Activated CD4-positive, alpha-beta T cell treated with anti-CD3 and anti-CD28 coated beads for 36 hours (primary cell): ENCODE measurements at regions of chr19 and their contacts with region 1.

Region 1: DNA sequence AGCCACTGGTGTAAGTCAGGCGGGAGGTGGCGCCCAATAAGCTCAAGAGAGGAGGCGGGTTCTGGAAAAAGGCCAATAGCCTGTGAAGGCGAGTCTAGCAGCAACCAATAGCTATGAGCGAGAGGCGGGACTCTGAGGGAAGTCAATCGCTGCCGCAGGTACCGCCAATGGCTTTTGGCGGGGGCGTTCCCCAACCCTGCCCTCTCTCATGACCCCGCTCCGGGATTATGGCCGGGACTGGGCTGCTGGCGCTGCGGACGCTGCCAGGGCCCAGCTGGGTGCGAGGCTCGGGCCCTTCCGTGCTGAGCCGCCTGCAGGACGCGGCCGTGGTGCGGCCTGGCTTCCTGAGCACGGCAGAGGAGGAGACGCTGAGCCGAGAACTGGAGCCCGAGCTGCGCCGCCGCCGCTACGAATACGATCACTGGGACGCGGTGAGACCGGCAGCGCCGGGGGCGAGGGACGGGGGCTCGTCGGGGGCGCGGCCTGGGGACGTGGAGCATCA is at the start of gene ALKBH7:
- DNase-seq: peak; percentile 98
- ATAC-seq: peak; percentile 84
- H3K4me3 Mint-ChIP-seq: peak within 1 kb of the TSS; percentile 80
- H3K27ac Mint-ChIP-seq: peak within 1 kb of the TSS; percentile 92
- H3K4me1 Mint-ChIP-seq: peaks cover 11% of the 10 kb centered on the region
- H3K27me3 Mint-ChIP-seq: no peaks in the 10 kb centered on the region
- total RNA-seq, gene ALKBH7: 22.8 to 44.7 TPM

Region 2: DNA sequence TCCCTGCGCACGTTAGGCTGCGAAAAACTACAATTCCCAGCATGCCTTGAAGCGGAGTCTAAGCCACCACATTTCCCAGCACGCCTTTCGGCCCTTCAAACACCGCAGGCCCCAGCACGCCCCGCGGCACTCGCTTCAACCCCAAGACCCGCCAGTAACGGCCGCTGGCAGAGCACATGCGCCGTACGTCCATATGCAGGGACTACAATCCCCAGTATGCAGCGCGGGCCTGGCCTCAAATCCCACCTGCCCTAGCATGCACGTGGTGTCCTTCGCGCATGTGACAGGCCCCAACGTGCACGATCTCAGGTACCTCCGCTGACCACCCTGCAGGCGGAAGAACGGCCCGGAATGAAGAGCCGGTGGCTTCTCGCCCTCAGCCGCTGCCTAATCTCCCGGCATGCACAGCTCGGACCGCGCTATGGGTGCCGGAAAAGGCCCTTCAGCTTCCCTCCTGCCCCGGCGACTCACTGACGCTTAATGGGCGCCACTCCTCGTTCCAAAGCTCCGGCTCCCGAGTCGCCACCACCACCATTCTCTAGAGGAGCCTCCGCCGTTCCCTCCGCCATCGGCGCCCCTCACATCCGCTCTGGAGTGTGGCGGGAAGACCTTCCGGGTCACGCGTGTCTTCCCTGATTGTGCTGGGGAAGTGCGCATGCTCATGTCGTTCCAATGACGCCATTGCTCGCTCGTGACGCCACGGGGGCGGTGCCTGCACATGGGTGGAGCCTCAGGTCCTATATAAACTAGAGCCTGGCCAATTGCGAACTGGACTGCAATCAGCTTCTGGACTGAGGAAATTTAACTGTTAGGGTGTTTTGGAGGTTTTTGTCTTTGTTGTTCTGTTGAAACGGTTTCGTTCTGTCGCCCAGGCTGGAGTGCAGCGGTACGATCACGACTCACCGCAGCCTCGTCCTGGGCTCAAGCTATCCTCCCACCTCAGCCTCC is 581.8 kb before region 1 on chr19 and contains the start of gene DUS3L:
- CTCF ChIA-PET with region 1: no interaction called
- POLR2A ChIA-PET with region 1: no interaction called
- intact Hi-C with region 1: loop called in 1 of 2 experiments (anchors 1 kb)
- DNase-seq: peak; percentile 98
- ATAC-seq: peak; percentile 97
- H3K4me3 Mint-ChIP-seq: peak within 1 kb of the TSS; percentile 98
- H3K27ac Mint-ChIP-seq: peak within 1 kb of the TSS; percentile 100
- H3K4me1 Mint-ChIP-seq: peaks cover 13% of the 10 kb centered on the region
- H3K27me3 Mint-ChIP-seq: no peaks in the 10 kb centered on the region
- total RNA-seq, gene DUS3L: 59.4 to 63.9 TPM

Region 3: DNA sequence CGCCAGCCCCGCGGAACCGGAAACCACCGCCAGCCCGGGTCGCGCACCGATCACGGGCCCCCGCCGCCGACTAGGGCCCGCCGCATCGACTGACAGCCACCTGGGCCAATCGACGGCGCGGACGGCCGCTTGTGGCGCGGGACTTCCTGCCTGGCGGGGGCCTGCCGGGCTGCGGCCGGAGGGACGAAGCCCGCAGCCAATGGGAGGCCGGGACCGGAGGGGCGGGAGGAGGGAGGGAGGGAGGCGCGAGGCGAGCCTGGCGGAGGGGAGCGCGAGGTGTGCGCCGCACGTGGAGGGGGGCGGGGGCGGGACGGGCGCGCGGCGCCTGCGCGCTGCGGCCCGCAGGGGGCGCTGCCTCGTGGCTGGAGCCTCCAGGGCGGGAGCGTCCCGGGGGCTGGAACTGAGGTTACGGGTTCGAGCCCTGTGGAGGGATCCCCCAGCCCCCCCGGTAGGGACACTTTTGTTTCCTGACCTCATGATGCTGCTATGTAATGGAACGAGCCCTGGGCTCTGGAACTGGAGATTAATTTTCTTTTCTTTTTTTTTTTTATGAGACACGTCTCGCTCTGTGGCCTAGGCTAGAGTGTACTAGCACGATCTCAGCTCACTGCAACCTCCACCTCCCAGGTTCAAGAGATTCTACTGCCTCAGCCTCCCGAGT is 92.6 kb before region 1 on chr19 and contains the start of gene MLLT1:
- CTCF ChIA-PET with region 1: no interaction called
- POLR2A ChIA-PET with region 1: no interaction called
- intact Hi-C with region 1: loop called in 1 of 2 experiments (anchors 1 kb)
- DNase-seq: peak; percentile 98
- ATAC-seq: peak; percentile 98
- H3K4me3 Mint-ChIP-seq: peak within 1 kb of the TSS; percentile 98
- H3K27ac Mint-ChIP-seq: peak within 1 kb of the TSS; percentile 93
- H3K4me1 Mint-ChIP-seq: peaks cover 38% of the 10 kb centered on the region
- H3K27me3 Mint-ChIP-seq: peaks cover 2% of the 10 kb centered on the region
- total RNA-seq, gene MLLT1: 45.0 to 46.6 TPM

Region 4: GRCh38 chr19:6460101-6460853 is 87.6 kb after region 1 on chr19:
- CTCF ChIA-PET with region 1: no interaction called
- POLR2A ChIA-PET with region 1: no interaction called
- intact Hi-C with region 1: loop called in 1 of 2 experiments (anchors 1 kb)
- DNase-seq: peak; percentile 99
- ATAC-seq: peak; percentile 83
- H3K4me3 Mint-ChIP-seq: peak overlapping the region; percentile 78
- H3K27ac Mint-ChIP-seq: peak overlapping the region; percentile 82
- H3K4me1 Mint-ChIP-seq: peaks cover 18% of the 10 kb centered on the region
- H3K27me3 Mint-ChIP-seq: no peaks in the 10 kb centered on the region

Region 5: GRCh38 chr19:6616011-6616410 is 243.4 kb after region 1 on chr19:
- CTCF ChIA-PET with region 1: no interaction called
- POLR2A ChIA-PET with region 1: no interaction called
- intact Hi-C with region 1: no loop called
- DNase-seq: peak; percentile 53
- ATAC-seq: peak; percentile 88
- H3K4me3 Mint-ChIP-seq: no peak overlapping the region
- H3K27ac Mint-ChIP-seq: peak overlapping the region; percentile 29
- H3K4me1 Mint-ChIP-seq: peaks cover 29% of the 10 kb centered on the region
- H3K27me3 Mint-ChIP-seq: peaks cover 32% of the 10 kb centered on the region

Region 6: GRCh38 chr19:6767357-6768235 is 395.0 kb after region 1 on chr19 and contains the start of gene SH2D3A:
- CTCF ChIA-PET with region 1: no interaction called
- POLR2A ChIA-PET with region 1: no interaction called
- intact Hi-C with region 1: loop called in 1 of 2 experiments (anchors 1 kb)
- DNase-seq: peak; percentile 97
- ATAC-seq: peak; percentile 78
- H3K4me3 Mint-ChIP-seq: peak within 1 kb of the TSS; percentile 83
- H3K27ac Mint-ChIP-seq: peak within 1 kb of the TSS; percentile 94
- H3K4me1 Mint-ChIP-seq: peaks cover 42% of the 10 kb centered on the region
- H3K27me3 Mint-ChIP-seq: no peaks in the 10 kb centered on the region
- total RNA-seq, gene SH2D3A: 20.7 to 23.2 TPM

Region 7: GRCh38 chr19:7919610-7920518 is 1547.2 kb after region 1 on chr19 and contains the start of gene SNAPC2:
- CTCF ChIA-PET with region 1: no interaction called
- POLR2A ChIA-PET with region 1: no interaction called
- intact Hi-C with region 1: loop called in 1 of 2 experiments (anchors 2 kb)
- DNase-seq: peak; percentile 98
- ATAC-seq: peak; percentile 76
- H3K4me3 Mint-ChIP-seq: peak within 1 kb of the TSS; percentile 82
- H3K27ac Mint-ChIP-seq: peak within 1 kb of the TSS; percentile 87
- H3K4me1 Mint-ChIP-seq: peaks cover 32% of the 10 kb centered on the region
- H3K27me3 Mint-ChIP-seq: peaks cover 20% of the 10 kb centered on the region
- total RNA-seq, gene SNAPC2: 14.6 to 16.2 TPM